PC-9 (cell line): ENCODE measurements at regions of chr4 and their contacts with region 1.

Region 1: DNA sequence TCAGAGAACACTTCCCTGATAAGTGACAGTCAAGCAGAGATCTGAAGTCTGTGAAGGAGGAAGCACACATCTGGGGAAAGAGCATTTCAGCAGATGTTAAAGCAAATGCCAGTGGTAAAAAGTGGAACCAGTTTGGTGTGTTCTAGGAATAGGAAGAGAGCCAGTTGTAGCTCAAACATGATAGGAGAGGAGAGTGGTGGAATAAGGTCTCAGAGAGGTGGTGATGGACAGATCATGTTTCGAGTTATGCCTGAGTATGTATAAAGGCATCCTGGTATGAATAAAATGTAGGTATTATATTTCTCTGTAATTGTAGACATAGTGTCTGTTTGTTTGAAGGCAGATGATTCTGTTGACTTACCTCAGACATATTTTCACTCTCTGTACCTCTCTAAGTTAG is 89.1 kb downstream of the LARP7 start:
- DNase-seq: peak; percentile 40 to 77
- H3K4me3 ChIP-seq: no peak overlapping the region
- H3K27ac ChIP-seq: no peak overlapping the region
- H3K4me1 ChIP-seq: peaks cover 14% of the 10 kb centered on the region
- H3K27me3 ChIP-seq: no peaks in the 10 kb centered on the region
- CTCF ChIP-seq: no peak

Region 2: DNA sequence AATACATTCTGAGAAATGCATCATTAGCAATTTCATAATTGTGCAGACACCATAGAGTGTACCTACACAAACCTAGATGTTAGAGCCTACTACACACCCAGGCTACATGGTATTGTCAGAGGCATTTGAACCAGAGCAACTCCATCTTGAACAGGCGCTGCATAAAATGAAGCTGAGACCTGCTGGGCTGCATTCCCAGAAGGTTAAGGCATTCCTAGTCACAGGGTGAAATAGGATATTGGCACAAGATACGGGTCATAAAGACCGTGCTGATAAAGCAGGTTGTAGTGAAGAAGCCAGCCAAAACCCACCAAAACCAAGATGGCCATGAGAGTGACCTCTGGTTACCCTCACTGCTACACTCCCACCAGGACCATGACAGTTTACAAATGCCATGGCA is 27.3 kb after region 1 on chr4:
- CTCF ChIA-PET with region 1: no interaction called
- POLR2A ChIA-PET with region 1: no interaction called
- intact Hi-C with region 1: loop called (anchors 1 kb)
- DNase-seq: peak; percentile 55 to 75
- H3K4me3 ChIP-seq: no peak overlapping the region
- H3K27ac ChIP-seq: no peak overlapping the region
- H3K4me1 ChIP-seq: peaks cover 30% of the 10 kb centered on the region
- H3K27me3 ChIP-seq: no peaks in the 10 kb centered on the region
- CTCF ChIP-seq: no peak

Region 3: DNA sequence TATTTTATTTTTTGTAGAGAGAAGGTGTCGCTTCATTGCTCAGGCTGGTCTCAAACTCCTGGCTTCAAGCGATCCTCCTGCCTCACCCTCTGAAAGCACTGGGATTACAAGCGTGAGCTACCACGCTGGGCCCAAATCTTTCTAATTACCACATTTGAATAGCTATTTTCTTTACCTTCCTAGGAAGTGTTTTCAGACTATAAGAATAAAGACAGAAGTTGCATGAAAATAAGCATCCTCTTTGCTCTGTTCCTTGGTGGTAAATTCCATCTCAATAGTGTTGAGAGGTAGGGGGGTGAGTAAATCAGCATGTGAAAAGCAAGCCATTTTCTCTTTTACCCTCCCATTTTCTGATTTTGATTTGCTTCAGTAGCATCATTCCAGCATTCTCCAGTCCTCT is 33.3 kb after region 1 on chr4:
- CTCF ChIA-PET with region 1: interaction called, 11 read pairs
- POLR2A ChIA-PET with region 1: interaction called, 23 read pairs
- intact Hi-C with region 1: no loop called
- DNase-seq: no peak
- H3K4me3 ChIP-seq: no peak overlapping the region
- H3K27ac ChIP-seq: no peak overlapping the region
- H3K4me1 ChIP-seq: no peaks in the 10 kb centered on the region
- H3K27me3 ChIP-seq: no peaks in the 10 kb centered on the region
- CTCF ChIP-seq: no peak

Region 4: GRCh38 chr4:113711883-113712662 is 986.0 kb after region 1 on chr4:
- CTCF ChIA-PET with region 1: no interaction called
- POLR2A ChIA-PET with region 1: no interaction called
- intact Hi-C with region 1: no loop called
- DNase-seq: no peak
- H3K4me3 ChIP-seq: no peak overlapping the region
- H3K27ac ChIP-seq: no peak overlapping the region
- H3K4me1 ChIP-seq: no peaks in the 10 kb centered on the region
- H3K27me3 ChIP-seq: no peaks in the 10 kb centered on the region
- CTCF ChIP-seq: no peak